Breast epithelium (tissue), 4 donors: ENCODE measurements at regions of chr7 and their contacts with region 1.

Region 1: DNA sequence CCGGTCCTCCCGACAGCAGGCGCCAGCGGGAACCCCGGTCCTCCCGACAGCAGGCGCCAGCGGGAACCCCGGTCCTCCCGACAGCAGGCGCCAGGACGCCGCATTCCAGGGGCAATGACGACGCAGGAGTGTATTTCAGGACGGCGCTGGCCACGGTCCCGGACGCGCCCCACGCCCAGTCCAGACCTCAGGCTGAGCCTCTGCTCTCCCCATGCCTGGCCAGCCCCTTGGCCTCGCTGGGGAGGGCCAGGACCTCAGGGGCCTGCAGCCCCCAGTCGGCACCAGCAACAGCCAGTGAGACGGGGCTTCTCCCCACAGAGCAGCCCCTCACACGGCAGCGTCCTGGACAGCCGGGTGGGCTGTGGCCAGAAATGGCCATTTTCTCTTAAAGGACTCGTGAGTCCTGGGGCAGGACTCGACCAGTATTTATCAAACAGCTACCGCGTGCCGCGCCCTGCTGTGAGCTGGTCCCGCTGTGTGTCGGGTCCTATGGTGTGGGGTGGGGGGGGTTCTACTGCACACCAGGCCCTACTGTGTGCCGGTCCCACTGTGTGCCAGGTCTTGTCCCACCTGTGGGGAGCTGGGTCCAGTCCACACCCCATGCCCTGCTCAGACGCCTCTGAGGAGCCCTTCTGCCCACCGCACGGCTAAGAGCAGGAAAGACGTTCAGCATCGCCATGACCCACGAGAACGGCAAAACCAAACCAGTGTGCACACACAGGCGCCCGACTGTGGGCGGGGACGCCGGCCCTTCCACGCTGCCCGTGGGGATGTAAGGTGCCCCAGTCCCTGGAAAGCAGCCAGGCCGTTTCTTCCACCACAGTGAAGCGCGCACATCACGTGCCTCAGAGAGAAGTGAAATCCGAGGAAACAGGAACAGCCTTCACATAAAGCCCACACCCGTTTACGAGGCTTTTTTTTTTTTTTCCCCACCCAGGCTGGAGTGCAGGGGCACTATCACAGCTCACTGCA is 33.3 kb downstream of the GET4 start:
- DNase-seq: no peak
- H3K4me3 ChIP-seq: peak overlapping the region; percentile 24 to 53 (median 25)
- H3K27ac ChIP-seq: no peak overlapping the region
- H3K4me1 ChIP-seq: no peaks in the 10 kb centered on the region
- H3K27me3 ChIP-seq: no peaks in the 10 kb centered on the region
- CTCF ChIP-seq: no peak
- POLR2A ChIP-seq: no peak

Region 2: DNA sequence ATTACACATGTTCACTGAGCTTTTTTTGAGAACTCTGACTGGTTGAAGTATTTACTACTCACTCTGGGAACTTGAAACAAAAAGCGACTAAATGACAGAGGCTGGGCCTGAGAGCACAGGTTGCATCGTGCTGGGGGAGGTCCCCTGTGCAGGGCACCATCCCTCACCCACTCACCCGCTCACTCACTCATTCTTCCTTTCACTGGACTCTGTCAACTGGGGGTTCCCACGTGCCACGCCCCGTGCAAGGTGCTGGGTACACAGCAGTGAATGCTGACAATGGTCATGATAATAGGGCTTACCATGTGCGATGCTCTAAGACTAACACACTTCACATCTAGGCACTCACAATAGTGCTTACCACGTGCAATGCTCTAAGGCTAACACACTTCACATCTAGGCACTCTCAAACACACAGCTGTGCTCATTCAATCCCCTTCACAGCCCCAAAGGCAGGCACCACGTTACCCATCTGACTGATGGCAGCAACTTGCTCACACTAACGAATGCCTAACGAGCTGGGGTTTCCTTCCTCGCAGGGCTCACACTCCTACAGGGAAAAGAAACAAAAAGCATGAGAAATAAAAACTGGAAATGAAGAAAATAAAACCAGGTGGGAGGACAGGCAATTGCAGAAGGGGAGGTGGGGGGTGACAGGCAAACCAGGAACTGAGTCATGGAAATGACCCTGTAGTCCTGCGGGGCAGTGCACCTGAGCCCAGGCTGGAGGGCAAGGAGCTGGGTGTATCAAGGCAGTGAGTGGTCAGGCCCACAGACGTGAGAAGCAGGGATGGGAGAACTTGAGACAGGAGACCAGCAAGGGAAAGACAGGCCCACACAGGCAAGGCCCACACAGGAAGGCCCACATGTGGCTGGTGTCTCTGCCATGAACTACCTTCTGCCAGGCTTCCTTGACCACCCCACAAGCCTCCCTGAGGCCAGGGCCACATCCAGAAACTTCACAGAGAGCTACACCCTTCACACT is 864.2 kb before region 1 on chr7:
- intact Hi-C with region 1: no loop called
- DNase-seq: peak; percentile 12 to 46
- H3K4me3 ChIP-seq: no peak overlapping the region
- H3K27ac ChIP-seq: no peak overlapping the region
- H3K4me1 ChIP-seq: no peaks in the 10 kb centered on the region
- H3K27me3 ChIP-seq: peaks cover 0 to 21% of the 10 kb centered on the region in 2 donors
- CTCF ChIP-seq: no peak
- POLR2A ChIP-seq: no peak

Region 3: GRCh38 chr7:668139-668931 is 241.3 kb before region 1 on chr7:
- intact Hi-C with region 1: no loop called
- DNase-seq: peak; percentile 51 to 65
- H3K4me3 ChIP-seq: peak overlapping the region in 1 of 3 donors; percentile 30
- H3K27ac ChIP-seq: peak overlapping the region; percentile 59 to 78
- H3K4me1 ChIP-seq: no peaks in the 10 kb centered on the region
- H3K27me3 ChIP-seq: no peaks in the 10 kb centered on the region
- CTCF ChIP-seq: no peak
- POLR2A ChIP-seq: no peak

Region 4: GRCh38 chr7:936131-937054 is 26.7 kb after region 1 on chr7:
- intact Hi-C with region 1: no loop called
- DNase-seq: no peak
- H3K4me3 ChIP-seq: no peak overlapping the region
- H3K27ac ChIP-seq: no peak overlapping the region
- H3K4me1 ChIP-seq: no peaks in the 10 kb centered on the region
- H3K27me3 ChIP-seq: no peaks in the 10 kb centered on the region
- CTCF ChIP-seq: no peak
- POLR2A ChIP-seq: no peak

Region 5: DNA sequence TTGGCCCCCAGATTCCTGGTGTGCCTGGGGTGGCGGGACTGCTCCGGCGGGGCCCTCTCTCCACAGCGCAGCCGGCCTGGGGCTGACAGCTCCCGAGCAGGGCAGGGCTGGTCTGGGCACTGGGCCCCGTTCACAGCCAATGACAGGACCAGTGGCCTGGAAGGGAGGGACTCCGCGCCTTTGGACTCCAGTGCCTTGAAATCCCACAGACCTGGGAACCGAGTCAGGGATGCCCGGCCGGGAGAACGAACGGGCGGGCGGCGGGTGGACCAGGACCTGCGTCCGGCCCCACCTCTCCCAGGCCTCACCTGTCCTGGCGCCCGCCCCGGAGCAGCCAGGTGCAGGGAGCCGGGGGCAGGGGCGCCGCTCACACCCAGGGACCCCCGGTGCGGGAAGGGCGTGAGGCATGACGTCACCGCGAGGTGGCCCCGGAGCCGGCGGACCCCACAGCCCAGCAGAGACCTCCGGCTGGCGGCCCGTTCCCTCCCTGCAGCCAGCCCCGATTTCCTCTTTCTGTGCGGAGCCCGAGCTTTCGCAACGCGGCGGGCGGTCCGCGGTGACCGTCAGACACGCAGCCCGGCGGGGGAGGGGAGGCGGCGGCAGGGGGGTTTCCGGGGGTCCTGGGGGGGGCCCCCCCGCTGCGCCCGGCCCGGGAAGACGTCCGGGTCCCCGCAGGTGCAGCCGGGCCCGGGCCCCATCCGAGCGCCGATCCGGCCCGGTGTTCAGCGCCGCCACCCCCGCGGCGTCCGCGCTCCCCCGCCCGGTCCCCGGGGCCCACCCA is 44.1 kb after region 1 on chr7:
- intact Hi-C with region 1: loop called (anchors 2 kb)
- DNase-seq: peak; percentile 41 to 68
- H3K4me3 ChIP-seq: peak overlapping the region; percentile 50 to 71 (median 60)
- H3K27ac ChIP-seq: no peak overlapping the region
- H3K4me1 ChIP-seq: no peaks in the 10 kb centered on the region
- H3K27me3 ChIP-seq: peaks cover 0 to 27% of the 10 kb centered on the region in 2 donors
- CTCF ChIP-seq: no peak
- POLR2A ChIP-seq: no peak